ENCODE measurements at regions of chr22 and their contacts with region 1.

Region 1: GRCh38 chr22:25461301-25461700 is 103.2 kb upstream of the GRK3 start:
- DNase-seq: no peak

Region 2: GRCh38 chr22:25475257-25476022 is 14.1 kb after region 1 on chr22:
- CTCF ChIA-PET with region 1: no interaction called
- POLR2A ChIA-PET with region 1: no interaction called
- DNase-seq: no peak

Region 3: GRCh38 chr22:25777870-25778269 is 316.6 kb after region 1 on chr22:
- CTCF ChIA-PET with region 1: interaction called, 12 read pairs
- POLR2A ChIA-PET with region 1: no interaction called
- DNase-seq: peak; percentile 61

Measured in HEK293T (cell line).